ENCODE measurements at regions of chr6 and their contacts with region 1.

Region 1: DNA sequence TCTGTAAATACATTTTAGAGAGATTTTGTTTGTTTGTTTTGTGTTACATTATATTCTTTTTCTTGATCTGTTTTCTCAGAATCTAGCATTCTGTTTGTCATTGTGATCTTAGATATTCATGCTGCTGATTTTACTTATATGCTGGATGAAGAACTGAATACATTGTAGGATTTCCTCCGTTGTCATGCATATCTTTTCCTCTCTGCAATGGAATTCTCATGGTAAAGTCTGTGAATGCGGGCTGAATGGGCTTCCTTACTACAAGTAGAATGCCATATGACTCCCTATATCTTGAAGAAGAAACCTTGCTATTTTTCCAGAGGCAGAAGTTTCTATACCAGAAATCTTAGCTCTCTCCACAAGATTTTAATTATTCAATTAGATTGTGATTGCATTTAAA is 2.4 kb upstream of the DEFB114 start:
- DNase-seq: no peak
- ATAC-seq: no peak
- H3K4me3 ChIP-seq: no peak overlapping the region
- H3K27ac ChIP-seq: no peak overlapping the region
- H3K4me1 ChIP-seq: no peaks in the 10 kb centered on the region
- H3K27me3 ChIP-seq: no peaks in the 10 kb centered on the region
- CTCF ChIP-seq: no peak
- EP300 ChIP-seq: no peak
- POLR2A ChIP-seq: no peak
- RAD21 ChIP-seq: no peak

Region 2: DNA sequence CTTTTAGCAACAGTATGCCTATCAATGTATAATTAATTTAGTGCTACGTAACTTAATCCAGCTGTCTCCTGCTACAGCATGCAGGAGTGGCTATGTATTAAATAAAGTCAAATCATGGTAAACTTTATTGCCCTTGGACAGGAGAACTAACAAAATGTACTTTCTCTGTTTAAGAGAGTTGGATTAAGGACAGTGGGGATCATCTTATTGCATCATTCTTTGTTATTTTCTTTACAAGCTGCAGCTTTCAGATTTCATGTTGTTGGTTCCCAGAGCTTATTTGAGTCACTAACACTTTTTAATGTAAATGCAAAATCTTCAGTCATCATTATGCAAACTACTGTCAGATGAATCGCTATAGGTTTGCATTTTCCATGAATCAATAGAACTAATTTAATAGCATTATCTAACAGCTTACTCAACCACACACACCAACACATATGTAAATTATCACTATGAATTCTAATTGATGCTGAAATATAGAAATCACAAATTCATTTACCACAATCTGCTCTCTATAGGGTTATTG is 928.0 kb before region 1 on chr6:
- CTCF ChIA-PET with region 1: no interaction called
- POLR2A ChIA-PET with region 1: no interaction called
- in situ Hi-C with region 1: no loop called
- intact Hi-C with region 1: no loop called
- DNase-seq: no peak
- ATAC-seq: no peak
- H3K4me3 ChIP-seq: no peak overlapping the region
- H3K27ac ChIP-seq: no peak overlapping the region
- H3K4me1 ChIP-seq: no peaks in the 10 kb centered on the region
- H3K27me3 ChIP-seq: no peaks in the 10 kb centered on the region
- CTCF ChIP-seq: no peak
- EP300 ChIP-seq: no peak
- POLR2A ChIP-seq: no peak
- RAD21 ChIP-seq: no peak

Region 3: DNA sequence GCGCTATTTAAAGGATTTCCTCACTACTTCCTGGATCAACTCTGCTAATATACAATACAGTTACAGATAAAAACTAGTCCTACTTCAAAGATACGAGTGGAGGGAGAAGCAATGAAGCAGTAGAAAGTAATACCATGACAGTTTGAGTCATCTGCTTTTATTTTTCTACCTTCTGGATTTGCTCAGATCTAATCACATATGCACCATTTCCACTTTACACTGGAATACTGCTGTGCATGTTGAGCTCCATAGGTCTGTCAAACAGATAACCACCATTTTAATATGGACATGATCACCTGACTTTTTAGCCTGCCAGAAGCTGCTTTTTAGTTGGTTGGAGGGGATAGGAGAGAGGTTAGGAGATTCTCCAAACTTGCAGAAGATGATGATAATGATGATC is 595.8 kb before region 1 on chr6:
- CTCF ChIA-PET with region 1: no interaction called
- POLR2A ChIA-PET with region 1: no interaction called
- in situ Hi-C with region 1: no loop called
- intact Hi-C with region 1: no loop called
- DNase-seq: no peak
- ATAC-seq: no peak
- H3K4me3 ChIP-seq: no peak overlapping the region
- H3K27ac ChIP-seq: no peak overlapping the region
- H3K4me1 ChIP-seq: no peaks in the 10 kb centered on the region
- H3K27me3 ChIP-seq: no peaks in the 10 kb centered on the region
- CTCF ChIP-seq: no peak
- EP300 ChIP-seq: no peak
- POLR2A ChIP-seq: no peak
- RAD21 ChIP-seq: no peak

Region 4: GRCh38 chr6:49841424-49841823 is 124.9 kb before region 1 on chr6:
- CTCF ChIA-PET with region 1: no interaction called
- POLR2A ChIA-PET with region 1: no interaction called
- in situ Hi-C with region 1: no loop called
- intact Hi-C with region 1: no loop called
- DNase-seq: peak in 3 of 4 experiments; percentile 18 to 50 (median 19)
- ATAC-seq: peak; percentile 61
- H3K4me3 ChIP-seq: no peak overlapping the region
- H3K27ac ChIP-seq: no peak overlapping the region
- H3K4me1 ChIP-seq: peaks cover 0 to 14% of the 10 kb centered on the region in 2 experiments; a peak in 2 of 5 replicates
- H3K27me3 ChIP-seq: no peaks in the 10 kb centered on the region
- CTCF ChIP-seq: no peak
- EP300 ChIP-seq: peak; percentile 51; the same call in 1 of the 2 replicates
- POLR2A ChIP-seq: no peak
- RAD21 ChIP-seq: no peak

Region 5: DNA sequence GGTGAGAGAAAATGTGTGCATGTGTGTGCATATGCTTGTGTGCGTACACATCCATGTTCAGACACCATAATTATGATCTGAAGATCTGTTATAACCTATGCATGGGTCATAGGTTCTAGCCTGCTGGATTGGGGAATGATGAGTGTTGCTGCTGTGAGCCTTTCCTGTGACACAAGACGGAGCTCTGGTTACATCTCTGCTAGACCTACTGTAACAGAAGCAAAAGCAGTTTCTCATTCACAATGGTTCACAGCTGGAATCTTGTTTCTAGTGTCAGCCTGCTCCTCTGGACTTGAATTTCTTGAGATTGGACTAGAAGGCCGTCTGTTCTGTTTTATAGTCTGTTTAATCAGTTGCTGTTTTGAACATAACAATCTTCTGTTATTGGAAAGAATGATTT is 42.5 kb before region 1 on chr6:
- CTCF ChIA-PET with region 1: no interaction called
- POLR2A ChIA-PET with region 1: no interaction called
- in situ Hi-C with region 1: no loop called
- intact Hi-C with region 1: loop called (anchors 5 kb)
- DNase-seq: peak in 1 of 4 experiments; percentile 45
- ATAC-seq: peak; percentile 95
- H3K4me3 ChIP-seq: no peak overlapping the region
- H3K27ac ChIP-seq: no peak overlapping the region
- H3K4me1 ChIP-seq: no peaks in the 10 kb centered on the region
- H3K27me3 ChIP-seq: no peaks in the 10 kb centered on the region
- CTCF ChIP-seq: peak in 2 of 3 experiments; percentile 58 to 63; a peak in 4 of 6 replicates
- EP300 ChIP-seq: no peak
- POLR2A ChIP-seq: no peak
- RAD21 ChIP-seq: peak; percentile 57 to 80

Region 6: DNA sequence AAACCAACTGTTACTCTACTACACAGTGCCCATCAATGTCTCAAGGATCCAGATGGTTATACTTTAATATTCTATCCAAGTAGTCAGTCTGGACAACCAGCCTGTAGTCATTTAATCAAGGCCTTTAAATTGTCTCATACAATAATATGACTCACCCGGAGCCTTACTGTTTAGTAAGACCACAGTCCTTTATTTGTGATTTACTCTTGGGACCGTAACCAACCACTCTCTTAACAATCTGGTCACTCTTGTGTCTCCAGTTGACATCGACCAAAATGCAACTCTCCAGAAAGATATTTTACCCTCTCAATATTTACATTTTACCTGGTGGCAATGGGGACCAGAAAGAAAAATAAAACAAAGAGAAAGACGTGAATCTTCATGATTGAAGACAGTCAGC is 17.3 kb before region 1 on chr6:
- CTCF ChIA-PET with region 1: no interaction called
- POLR2A ChIA-PET with region 1: interaction called, 13 read pairs
- in situ Hi-C with region 1: no loop called
- intact Hi-C with region 1: no loop called
- DNase-seq: peak; percentile 15 to 45 (median 18)
- ATAC-seq: peak; percentile 78
- H3K4me3 ChIP-seq: peak overlapping the region; percentile 43
- H3K27ac ChIP-seq: peak overlapping the region; percentile 76
- H3K4me1 ChIP-seq: no peaks in the 10 kb centered on the region
- H3K27me3 ChIP-seq: no peaks in the 10 kb centered on the region
- CTCF ChIP-seq: no peak
- EP300 ChIP-seq: no peak
- POLR2A ChIP-seq: no peak
- RAD21 ChIP-seq: no peak